Dendritic cell treated with granulocyte-macrophage colony-stimulating factor and Interleukin-4, amounts not matched to agents 40 ng/mL and 50 ng/mL, for 4 days (primary cell): ENCODE measurements at regions of chr1 and their contacts with region 1.

Region 1: GRCh38 chr1:108947871-108948525 is 15.3 kb downstream of the CLCC1 start:
- H3K4me3 Mint-ChIP-seq: no peak overlapping the region
- H3K27ac Mint-ChIP-seq: no peak overlapping the region
- H3K4me1 Mint-ChIP-seq: peaks cover 18% of the 10 kb centered on the region
- H3K27me3 Mint-ChIP-seq: no peaks in the 10 kb centered on the region

Region 2: DNA sequence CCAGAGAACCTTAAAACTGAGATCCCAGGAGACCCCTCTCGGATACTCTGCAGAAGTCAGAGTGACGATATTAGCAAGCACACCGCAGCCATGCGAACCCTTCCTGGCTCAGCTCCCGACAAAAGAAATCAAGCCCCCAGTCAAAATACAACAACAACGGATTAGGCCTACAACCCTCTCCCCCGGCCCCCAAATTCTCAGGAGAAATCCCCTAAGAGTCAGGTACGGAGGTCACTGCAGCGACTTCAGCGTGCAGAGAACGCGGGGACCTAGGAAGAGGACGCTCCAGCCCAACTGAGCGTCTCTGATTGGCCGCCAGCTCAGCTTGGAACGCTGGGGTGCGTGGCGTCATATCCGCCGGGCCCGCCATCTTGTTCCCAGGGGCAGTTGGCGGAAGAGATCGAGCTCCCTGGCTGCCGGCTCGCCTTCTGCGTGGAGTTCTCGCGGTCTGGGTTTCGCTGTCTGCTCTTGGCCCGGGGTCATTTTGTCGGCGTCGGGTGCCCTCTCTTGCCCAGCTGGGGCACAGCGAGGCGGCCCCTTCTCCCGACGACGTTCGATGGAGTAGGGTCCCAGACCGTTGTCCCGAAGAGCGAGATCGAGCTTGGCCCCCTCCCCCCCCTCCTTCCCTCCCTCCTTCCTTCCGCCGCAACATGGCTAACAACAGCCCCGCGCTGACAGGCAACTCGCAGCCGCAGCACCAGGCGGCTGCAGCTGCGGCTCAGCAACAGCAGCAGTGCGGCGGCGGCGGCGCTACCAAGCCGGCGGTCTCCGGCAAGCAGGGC is 255.9 kb before region 1 on chr1 and contains the start of gene PRPF38B:
- intact Hi-C with region 1: no loop called
- H3K4me3 Mint-ChIP-seq: peak within 1 kb of the TSS; percentile 96
- H3K27ac Mint-ChIP-seq: peak within 1 kb of the TSS; percentile 100
- H3K4me1 Mint-ChIP-seq: peaks cover 21% of the 10 kb centered on the region
- H3K27me3 Mint-ChIP-seq: no peaks in the 10 kb centered on the region

Region 3: DNA sequence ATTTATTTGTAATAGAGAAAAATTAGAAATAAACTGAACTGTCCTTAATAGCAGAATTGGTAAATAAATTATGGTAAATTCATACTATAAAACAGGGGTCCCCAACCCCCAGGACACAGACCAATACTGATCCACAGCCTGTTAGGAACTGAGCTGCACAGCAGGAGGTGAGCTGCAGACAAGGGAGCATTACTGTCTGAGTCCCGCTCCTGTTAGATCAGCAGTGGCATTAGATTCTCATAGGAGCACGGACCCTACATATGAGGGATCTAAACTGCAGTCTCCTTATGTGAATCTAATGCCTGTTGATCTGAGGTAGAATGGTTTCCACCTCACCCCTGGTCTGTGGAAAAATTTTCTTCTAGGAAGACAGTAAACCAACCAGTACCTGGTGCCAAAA is 86.4 kb after region 1 on chr1:
- intact Hi-C with region 1: loop called (anchors 10 kb)
- H3K4me3 Mint-ChIP-seq: no peak overlapping the region
- H3K27ac Mint-ChIP-seq: no peak overlapping the region
- H3K4me1 Mint-ChIP-seq: peaks cover 5% of the 10 kb centered on the region
- H3K27me3 Mint-ChIP-seq: no peaks in the 10 kb centered on the region